HEK293 (cell line): ENCODE measurements at regions of chr5 and their contacts with region 1.

Region 1: GRCh38 chr5:1380011-1380817 is 35.3 kb upstream of the CLPTM1L start:
- H3K4me3 ChIP-seq: no peak overlapping the region
- H3K27ac ChIP-seq: 0 out of 2 replicates have a peak overlapping the region, but pooled peaks have one; percentile 9
- H3K4me1 ChIP-seq: peaks cover 3% of the 10 kb centered on the region; the same call in 1 of the 2 replicates
- CTCF ChIP-seq: peak; percentile 70

Region 2: DNA sequence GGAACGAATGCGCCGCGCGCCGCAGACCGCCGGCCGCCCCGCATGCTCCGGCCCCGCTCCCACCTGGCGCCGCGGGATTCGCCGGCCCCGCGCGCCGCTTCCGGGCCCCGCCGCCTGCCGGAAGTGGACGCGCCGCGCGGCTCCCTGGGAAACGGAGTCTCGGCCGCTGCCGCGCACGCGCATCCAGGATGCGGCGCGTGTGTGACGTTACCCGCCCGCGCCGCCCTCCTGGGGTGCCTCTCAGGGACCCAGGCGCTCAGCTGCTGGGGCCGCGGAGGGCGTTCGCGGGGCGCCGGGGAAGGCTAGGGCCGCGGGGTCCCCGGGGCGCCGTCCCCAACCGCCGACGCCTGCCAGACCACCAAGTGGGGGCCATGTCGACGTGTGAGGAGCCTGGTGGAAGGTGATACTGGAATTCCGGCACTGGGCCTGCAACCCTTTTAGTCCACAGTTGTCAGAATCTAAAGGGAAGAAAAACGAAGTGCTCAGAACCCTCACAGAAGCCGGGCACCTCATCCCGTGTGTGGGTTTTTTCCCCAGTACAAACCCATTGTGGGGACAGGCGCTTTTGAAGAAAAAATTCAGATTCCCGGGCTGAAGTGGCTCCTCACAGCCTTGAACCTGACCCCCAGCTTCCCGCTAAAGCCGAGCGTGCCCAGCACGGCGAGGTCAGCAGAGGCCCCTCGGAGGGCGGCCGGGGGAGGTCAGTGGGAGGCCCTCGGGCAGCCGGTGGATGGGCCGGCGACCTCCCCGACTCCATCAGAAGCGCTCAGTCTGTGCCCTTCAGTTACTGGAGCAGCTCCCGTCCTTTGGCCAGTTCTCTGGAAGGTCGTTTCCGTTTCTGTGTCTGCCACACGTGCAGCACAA is 35.0 kb before region 1 on chr5 and contains the start of gene CLPTM1L:
- CTCF ChIA-PET with region 1: interaction called, 12 read pairs
- POLR2A ChIA-PET with region 1: no interaction called
- H3K4me3 ChIP-seq: peak within 1 kb of the TSS; percentile 91
- H3K27ac ChIP-seq: peak within 1 kb of the TSS; percentile 64; the same call in 1 of the 2 replicates
- H3K4me1 ChIP-seq: peaks cover 7% of the 10 kb centered on the region; the same call in 1 of the 2 replicates
- CTCF ChIP-seq: no peak

Region 3: DNA sequence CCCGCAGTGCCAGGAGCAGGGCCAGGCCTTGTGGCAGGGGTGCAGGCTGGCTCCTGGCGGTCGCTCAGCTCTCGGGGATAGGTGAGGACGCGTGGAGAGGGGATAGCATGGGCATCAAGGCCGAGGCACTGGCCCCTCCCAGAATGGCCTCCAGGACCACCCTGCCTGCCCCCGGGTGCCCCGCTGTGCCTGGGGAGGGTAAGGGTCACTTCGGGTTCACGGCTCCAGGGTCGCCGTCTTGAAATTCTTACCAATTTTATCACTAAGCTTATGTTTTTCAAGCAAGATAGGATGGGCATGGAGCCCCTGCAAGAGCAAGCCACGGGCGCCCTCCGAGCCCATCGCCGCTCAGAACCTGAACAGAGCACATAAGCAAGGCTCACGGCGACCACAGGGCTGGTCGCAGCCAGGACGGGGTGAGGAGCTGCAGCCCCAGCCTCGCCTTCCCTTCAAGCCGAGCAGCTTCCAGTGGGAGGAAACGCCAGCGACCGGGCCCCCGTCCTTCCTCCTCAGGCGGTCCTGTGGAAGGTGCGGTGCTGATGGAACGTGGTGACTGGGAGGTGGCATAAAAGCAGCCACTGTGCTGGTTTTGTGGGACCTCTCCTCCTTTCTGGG is 21.1 kb before region 1 on chr5:
- CTCF ChIA-PET with region 1: interaction called, 15 read pairs
- POLR2A ChIA-PET with region 1: no interaction called
- H3K4me3 ChIP-seq: no peak overlapping the region
- H3K27ac ChIP-seq: no peak overlapping the region
- H3K4me1 ChIP-seq: no peaks in the 10 kb centered on the region
- CTCF ChIP-seq: no peak

Region 4: GRCh38 chr5:1370006-1370405 is 10.2 kb before region 1 on chr5:
- CTCF ChIA-PET with region 1: interaction called, 11 read pairs
- POLR2A ChIA-PET with region 1: no interaction called
- H3K4me3 ChIP-seq: no peak overlapping the region
- H3K27ac ChIP-seq: no peak overlapping the region
- H3K4me1 ChIP-seq: no peaks in the 10 kb centered on the region
- CTCF ChIP-seq: no peak

Region 5: DNA sequence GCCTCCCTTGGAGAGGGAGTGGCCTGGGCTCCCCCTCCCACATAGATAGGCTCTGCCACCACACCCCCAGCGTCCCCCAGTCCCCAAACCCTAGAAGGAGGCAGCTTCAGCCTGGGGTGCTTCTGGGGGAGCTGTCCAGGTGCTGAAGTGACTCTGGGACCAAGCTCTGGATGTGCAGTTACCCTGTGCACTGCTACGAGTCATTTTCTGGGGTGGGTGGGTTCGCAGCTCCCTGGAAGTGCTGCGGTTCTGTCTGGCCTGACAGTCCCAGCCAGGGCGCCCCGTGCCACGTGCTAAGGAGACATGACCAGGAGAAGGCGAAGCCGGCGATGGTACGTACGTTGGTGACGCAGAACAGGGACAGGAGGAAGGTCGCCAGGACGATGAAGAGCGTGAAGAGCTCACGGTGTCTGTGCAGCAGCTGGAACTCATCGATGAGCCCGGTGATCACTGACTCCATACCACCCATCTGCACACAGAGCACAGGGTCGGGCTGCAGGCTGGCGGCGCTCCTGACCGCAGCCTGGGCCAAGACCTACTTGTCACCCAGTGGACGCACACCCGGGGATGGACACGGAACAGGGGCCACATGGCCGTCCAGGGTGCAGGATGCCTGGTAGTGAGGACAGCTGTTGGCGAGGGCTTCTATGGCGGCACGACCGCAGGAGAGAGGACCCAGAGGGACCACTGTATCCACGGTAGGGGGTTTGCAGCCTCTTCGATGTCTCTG is 29.3 kb after region 1 on chr5:
- CTCF ChIA-PET with region 1: interaction called, 22 read pairs
- POLR2A ChIA-PET with region 1: no interaction called
- H3K4me3 ChIP-seq: no peak overlapping the region
- H3K27ac ChIP-seq: no peak overlapping the region
- H3K4me1 ChIP-seq: peaks cover 6% of the 10 kb centered on the region; the same call in 1 of the 2 replicates
- CTCF ChIP-seq: no peak